ENCODE measurements at regions of chr1 and their contacts with region 1.

Region 1: DNA sequence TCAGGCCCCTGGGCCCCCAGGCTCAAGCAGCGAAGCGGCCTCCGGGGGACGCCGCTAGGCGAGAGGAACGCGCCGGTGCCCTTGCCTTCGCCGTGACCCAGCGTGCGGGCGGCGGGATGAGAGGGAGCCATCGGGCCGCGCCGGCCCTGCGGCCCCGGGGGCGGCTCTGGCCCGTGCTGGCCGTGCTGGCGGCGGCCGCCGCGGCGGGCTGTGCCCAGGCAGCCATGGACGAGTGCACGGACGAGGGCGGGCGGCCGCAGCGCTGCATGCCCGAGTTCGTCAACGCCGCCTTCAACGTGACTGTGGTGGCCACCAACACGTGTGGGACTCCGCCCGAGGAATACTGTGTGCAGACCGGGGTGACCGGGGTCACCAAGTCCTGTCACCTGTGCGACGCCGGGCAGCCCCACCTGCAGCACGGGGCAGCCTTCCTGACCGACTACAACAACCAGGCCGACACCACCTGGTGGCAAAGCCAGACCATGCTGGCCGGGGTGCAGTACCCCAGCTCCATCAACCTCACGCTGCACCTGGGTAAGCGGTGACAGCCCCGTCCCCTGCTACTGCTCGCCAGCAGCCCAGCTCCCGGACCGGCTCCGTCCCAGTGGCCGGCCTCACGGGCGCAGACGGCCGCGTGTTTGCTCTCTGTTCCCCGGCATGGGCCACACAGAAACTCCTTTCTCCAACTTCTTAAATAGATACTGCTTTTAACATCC is 539 bp downstream of the LAMC1 start:
- DNase-seq: peak; percentile 90
- H3K4me3 Mint-ChIP-seq: peak overlapping the region; percentile 93
- H3K27ac Mint-ChIP-seq: peak overlapping the region; percentile 97
- H3K4me1 Mint-ChIP-seq: peaks cover 54% of the 10 kb centered on the region
- H3K27me3 Mint-ChIP-seq: no peaks in the 10 kb centered on the region
- CTCF ChIP-seq: peak; percentile 55

Region 2: GRCh38 chr1:182829285-182829932 is 194.3 kb before region 1 on chr1:
- CTCF ChIA-PET with region 1: no interaction called
- POLR2A ChIA-PET with region 1: no interaction called
- intact Hi-C with region 1: no loop called
- DNase-seq: no peak
- H3K4me3 Mint-ChIP-seq: no peak overlapping the region
- H3K27ac Mint-ChIP-seq: no peak overlapping the region
- H3K4me1 Mint-ChIP-seq: peaks cover 6% of the 10 kb centered on the region
- H3K27me3 Mint-ChIP-seq: no peaks in the 10 kb centered on the region
- CTCF ChIP-seq: no peak

Region 3: DNA sequence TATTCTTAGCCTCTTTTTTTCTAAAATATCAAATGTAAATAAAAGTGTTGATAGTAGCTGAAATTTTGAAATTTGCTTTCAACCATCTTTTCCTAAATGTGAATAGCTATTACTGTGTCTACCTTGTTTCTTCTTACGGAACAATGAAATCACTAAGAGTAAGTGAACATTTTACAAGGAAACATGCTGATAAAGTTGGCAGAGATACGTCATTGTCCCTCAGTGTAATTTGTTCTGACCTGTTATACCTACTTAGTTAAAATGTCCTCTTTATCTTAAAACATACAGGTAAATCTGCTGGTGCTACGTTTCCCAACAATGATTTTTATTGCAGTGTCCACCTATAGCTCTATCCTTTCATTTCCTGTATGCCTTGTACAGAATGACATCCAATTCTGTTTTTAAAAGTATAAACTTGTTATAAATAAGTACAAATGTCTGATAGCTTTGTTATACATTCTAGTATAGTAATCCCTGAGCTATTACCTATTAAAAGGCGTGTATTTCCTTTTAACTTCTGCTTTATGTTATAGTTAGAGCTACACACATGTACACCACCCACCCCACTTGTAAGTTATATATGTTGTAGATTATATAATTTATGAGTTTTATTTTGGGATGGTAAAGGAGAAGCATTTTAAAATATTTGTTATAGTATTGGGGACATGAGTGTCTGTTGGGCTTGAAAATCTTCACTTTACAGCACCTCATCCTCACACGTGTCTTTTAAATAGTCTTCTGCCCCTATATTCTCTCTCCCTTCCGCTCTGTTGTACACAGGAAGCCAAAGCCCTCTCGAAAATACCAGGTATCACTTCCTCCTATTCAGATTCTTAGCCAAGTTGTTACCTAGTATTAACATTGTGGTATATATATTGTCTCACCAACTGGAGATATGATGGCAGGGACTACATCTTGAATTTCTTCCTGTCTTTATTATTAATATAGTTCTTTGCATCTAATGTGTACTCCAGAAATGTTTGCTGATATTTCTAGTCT is 24.6 kb after region 1 on chr1:
- CTCF ChIA-PET with region 1: interaction called, 5 read pairs
- POLR2A ChIA-PET with region 1: interaction called, 13 read pairs
- intact Hi-C with region 1: no loop called
- DNase-seq: no peak
- H3K4me3 Mint-ChIP-seq: no peak overlapping the region
- H3K27ac Mint-ChIP-seq: no peak overlapping the region
- H3K4me1 Mint-ChIP-seq: peaks cover 44% of the 10 kb centered on the region
- H3K27me3 Mint-ChIP-seq: no peaks in the 10 kb centered on the region
- CTCF ChIP-seq: no peak

Region 4: GRCh38 chr1:183080406-183080805 is 56.6 kb after region 1 on chr1:
- CTCF ChIA-PET with region 1: interaction called, 4 read pairs
- POLR2A ChIA-PET with region 1: interaction called, 25 read pairs
- intact Hi-C with region 1: no loop called
- DNase-seq: no peak
- H3K4me3 Mint-ChIP-seq: no peak overlapping the region
- H3K27ac Mint-ChIP-seq: no peak overlapping the region
- H3K4me1 Mint-ChIP-seq: peaks cover 52% of the 10 kb centered on the region
- H3K27me3 Mint-ChIP-seq: no peaks in the 10 kb centered on the region
- CTCF ChIP-seq: no peak

Region 5: GRCh38 chr1:183139281-183139942 is 115.7 kb after region 1 on chr1:
- CTCF ChIA-PET with region 1: interaction called, 3 read pairs
- POLR2A ChIA-PET with region 1: interaction called, 10 read pairs
- intact Hi-C with region 1: loop called (anchors 2 kb)
- DNase-seq: peak; percentile 81
- H3K4me3 Mint-ChIP-seq: peak overlapping the region; percentile 1
- H3K27ac Mint-ChIP-seq: peak overlapping the region; percentile 99
- H3K4me1 Mint-ChIP-seq: peaks cover 27% of the 10 kb centered on the region
- H3K27me3 Mint-ChIP-seq: no peaks in the 10 kb centered on the region
- CTCF ChIP-seq: no peak

Region 6: GRCh38 chr1:183209533-183210158 is 185.9 kb after region 1 on chr1:
- CTCF ChIA-PET with region 1: no interaction called
- POLR2A ChIA-PET with region 1: interaction called, 22 read pairs
- intact Hi-C with region 1: loop called (anchors 1 kb)
- DNase-seq: peak; percentile 96
- H3K4me3 Mint-ChIP-seq: no peak overlapping the region
- H3K27ac Mint-ChIP-seq: peak overlapping the region; percentile 94
- H3K4me1 Mint-ChIP-seq: peaks cover 46% of the 10 kb centered on the region
- H3K27me3 Mint-ChIP-seq: no peaks in the 10 kb centered on the region
- CTCF ChIP-seq: no peak

Measured in MCF 10A (cell line).